GM18951 (cell line): ENCODE measurements at regions of chr12 and their contacts with region 1.

Region 1: DNA sequence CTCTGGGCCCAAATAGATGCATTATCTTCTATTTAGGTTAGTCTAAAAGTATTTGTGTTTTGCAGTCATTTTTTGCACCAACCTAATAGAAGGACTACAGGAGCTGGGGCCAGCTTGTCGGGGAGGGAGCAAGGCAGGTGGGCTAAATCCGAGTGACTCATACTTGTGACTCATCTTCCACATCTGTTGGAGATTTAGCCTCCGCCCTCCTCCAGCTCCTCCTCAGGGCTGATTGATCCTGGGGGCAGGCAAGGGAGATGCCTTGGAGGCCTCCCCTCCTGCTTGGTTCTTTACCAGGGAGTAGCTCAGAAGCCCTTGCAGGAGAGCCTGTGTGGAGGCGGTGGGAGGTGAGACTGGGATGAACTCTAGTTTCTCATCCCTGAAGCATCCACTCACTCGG is 27.9 kb downstream of the RHOF start:
- POLR2A ChIP-seq: no peak

Region 2: DNA sequence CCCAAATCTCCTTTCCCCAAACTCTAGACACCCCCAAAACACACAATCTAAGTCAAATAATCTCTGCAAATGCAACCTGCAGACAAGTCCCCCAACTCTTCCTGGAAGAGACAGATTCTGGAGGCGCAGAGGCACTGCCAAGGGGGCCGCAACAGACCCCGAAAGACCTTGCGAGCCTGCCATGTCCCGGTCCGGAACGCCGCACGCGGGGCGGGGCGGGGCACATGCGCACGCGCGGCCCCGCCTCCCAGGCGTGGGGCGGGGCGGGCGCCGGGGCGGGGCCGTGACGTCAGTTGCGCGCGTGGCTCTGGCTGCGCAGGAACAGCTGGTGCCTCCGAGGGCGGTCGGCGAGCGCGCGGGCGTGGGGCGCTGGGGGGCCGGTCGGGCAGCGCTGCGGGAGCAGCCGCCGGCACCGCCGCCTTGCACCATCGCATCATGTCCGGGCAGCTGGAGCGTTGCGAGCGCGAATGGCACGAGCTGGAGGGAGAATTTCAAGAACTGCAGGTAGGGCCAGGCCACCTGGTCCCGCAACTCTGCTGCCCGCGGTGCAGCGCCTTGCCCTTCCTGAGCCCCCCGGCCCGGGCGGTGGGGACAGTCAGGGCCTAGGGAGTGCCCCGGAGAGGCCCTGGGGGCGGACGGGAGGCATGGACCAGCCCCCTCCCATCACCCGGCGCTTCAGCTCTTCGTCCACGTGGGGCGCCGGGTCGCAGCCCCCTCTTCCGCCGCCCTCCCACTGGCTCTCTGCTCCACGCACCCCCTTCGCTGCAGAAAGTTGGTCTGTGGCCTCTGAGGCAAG is 52.9 kb before region 1 on chr12 and contains the start of gene TMEM120B:
- in situ Hi-C with region 1: loop called (anchors 10 kb)
- POLR2A ChIP-seq: peak; percentile 89

Region 3: DNA sequence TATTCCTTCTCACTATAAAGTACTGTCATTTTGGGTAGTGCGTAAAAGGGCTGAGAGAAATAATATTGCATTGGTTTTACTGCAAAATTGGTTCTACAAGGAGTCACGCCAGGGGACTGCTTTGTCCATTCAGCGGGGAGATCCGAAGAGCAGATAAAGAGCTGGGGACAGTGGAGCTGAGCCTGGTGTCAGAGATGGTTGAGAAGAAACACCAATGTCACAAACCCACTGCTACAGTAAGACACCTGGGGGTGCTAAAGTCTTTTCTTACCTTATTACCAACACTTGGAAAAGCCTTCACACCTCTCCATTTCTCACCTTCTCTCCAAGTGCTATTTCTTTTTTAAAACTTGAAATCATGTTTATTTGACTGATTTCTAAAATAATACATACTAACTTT is 394.3 kb after region 1 on chr12:
- in situ Hi-C with region 1: no loop called
- POLR2A ChIP-seq: no peak